Activated CD4-positive, alpha-beta T cell treated with anti-CD3 and anti-CD28 coated beads for 36 hours (primary cell): ENCODE measurements at regions of chr2 and their contacts with region 1.

Region 1: GRCh38 chr2:172931918-172932520 is 143.6 kb upstream of the MAP3K20 start:
- DNase-seq: peak; percentile 82
- ATAC-seq: peak; percentile 55
- H3K4me3 Mint-ChIP-seq: no peak overlapping the region
- H3K27ac Mint-ChIP-seq: no peak overlapping the region
- H3K4me1 Mint-ChIP-seq: peaks cover 5% of the 10 kb centered on the region
- H3K27me3 Mint-ChIP-seq: peaks cover 6% of the 10 kb centered on the region

Region 2: GRCh38 chr2:172693037-172693436 is 239.0 kb before region 1 on chr2:
- CTCF ChIA-PET with region 1: no interaction called
- POLR2A ChIA-PET with region 1: no interaction called
- intact Hi-C with region 1: no loop called
- DNase-seq: peak; percentile 74
- ATAC-seq: peak; percentile 98
- H3K4me3 Mint-ChIP-seq: no peak overlapping the region
- H3K27ac Mint-ChIP-seq: no peak overlapping the region
- H3K4me1 Mint-ChIP-seq: peaks cover 35% of the 10 kb centered on the region
- H3K27me3 Mint-ChIP-seq: peaks cover 2% of the 10 kb centered on the region

Region 3: GRCh38 chr2:172864182-172864581 is 67.8 kb before region 1 on chr2:
- CTCF ChIA-PET with region 1: interaction called, 63 read pairs
- POLR2A ChIA-PET with region 1: no interaction called
- intact Hi-C with region 1: loop called (anchors 1 kb)
- DNase-seq: peak; percentile 79
- ATAC-seq: peak; percentile 36
- H3K4me3 Mint-ChIP-seq: no peak overlapping the region
- H3K27ac Mint-ChIP-seq: no peak overlapping the region
- H3K4me1 Mint-ChIP-seq: no peaks in the 10 kb centered on the region
- H3K27me3 Mint-ChIP-seq: peaks cover 5% of the 10 kb centered on the region

Region 4: DNA sequence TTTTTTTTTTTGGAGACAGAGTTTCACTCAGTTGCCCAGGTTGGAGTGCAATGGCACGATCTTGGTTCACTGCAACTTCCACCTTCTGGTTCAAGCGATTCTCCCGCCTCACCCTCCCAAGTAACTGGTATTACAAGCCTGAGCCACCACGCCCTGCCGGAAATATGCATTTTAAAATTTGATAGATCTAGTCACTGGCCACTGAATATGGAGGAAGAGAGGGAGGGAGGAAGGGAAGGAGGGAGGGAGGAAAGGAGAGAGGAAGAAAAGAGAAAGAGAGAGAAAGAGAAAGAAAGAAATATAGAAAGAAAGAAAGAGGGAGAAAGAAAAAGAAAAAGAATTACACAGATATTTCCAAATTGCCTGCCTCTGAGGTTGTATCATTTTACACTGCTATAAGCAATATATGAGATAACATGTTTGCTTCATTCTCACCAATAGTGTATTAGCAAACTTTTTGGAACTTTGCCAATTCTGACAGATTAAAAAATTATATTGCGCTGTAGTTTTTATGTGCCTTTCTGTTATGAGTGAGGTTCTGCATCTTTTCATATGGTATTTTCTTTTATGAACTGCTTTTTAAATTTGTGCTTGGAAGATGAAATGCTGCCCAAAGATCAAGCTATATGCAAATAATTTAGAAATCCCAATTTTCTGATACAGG is 17.5 kb before region 1 on chr2:
- CTCF ChIA-PET with region 1: interaction called, 44 read pairs
- POLR2A ChIA-PET with region 1: no interaction called
- intact Hi-C with region 1: no loop called
- DNase-seq: no peak
- ATAC-seq: no peak
- H3K4me3 Mint-ChIP-seq: no peak overlapping the region
- H3K27ac Mint-ChIP-seq: no peak overlapping the region
- H3K4me1 Mint-ChIP-seq: peaks cover 20% of the 10 kb centered on the region
- H3K27me3 Mint-ChIP-seq: no peaks in the 10 kb centered on the region

Region 5: GRCh38 chr2:172953970-172954852 is 22.2 kb after region 1 on chr2:
- CTCF ChIA-PET with region 1: interaction called, 10 read pairs
- POLR2A ChIA-PET with region 1: no interaction called
- intact Hi-C with region 1: no loop called
- DNase-seq: no peak
- ATAC-seq: peak; percentile 44
- H3K4me3 Mint-ChIP-seq: no peak overlapping the region
- H3K27ac Mint-ChIP-seq: peak overlapping the region; percentile 32
- H3K4me1 Mint-ChIP-seq: peaks cover 16% of the 10 kb centered on the region
- H3K27me3 Mint-ChIP-seq: no peaks in the 10 kb centered on the region